PC-9 (cell line): ENCODE measurements at regions of chr19 and their contacts with region 1.

Region 1: DNA sequence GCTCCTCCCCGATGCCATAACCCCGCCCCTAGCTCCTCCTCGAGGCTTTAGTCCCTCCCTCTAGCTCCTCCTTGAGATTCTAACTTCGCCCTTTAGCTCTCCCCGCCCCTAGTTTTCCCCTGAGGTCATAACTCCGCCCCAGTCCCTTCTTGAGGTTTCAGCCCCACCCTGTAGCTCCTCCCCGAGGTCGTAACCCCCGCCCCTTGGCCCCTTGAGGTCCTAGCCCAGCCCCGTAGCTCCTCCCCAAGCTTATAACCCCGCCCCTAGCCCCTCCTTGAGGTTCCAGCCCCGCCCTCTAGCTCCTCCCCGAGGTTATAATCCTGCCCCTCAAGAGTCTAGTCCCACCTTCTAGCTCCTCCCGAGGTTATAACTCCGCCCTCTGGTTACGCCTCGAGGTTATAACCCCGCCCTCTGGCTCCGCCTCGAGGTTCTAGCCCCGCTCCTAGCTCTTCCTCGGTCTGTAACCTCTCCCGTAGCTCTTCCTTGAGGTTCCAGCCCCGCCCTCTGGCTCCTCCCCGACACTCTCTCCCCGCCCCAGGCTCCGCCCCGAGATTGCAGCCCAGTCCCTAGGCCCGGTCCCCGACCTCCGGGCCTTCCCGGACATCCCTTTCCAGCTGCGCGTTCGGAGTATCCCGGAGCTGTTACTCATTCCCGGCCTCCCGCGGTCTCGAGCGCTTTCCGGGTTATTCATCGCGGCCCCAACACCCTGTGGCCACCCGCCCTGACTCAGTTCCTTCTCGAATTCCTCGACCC is 1.4 kb downstream of the PLAUR start:
- DNase-seq: peak; percentile 97 to 99
- H3K4me3 ChIP-seq: peak overlapping the region; percentile 92
- H3K27ac ChIP-seq: peak overlapping the region; percentile 86
- H3K4me1 ChIP-seq: peaks cover 31% of the 10 kb centered on the region
- H3K27me3 ChIP-seq: no peaks in the 10 kb centered on the region
- CTCF ChIP-seq: no peak

Region 2: DNA sequence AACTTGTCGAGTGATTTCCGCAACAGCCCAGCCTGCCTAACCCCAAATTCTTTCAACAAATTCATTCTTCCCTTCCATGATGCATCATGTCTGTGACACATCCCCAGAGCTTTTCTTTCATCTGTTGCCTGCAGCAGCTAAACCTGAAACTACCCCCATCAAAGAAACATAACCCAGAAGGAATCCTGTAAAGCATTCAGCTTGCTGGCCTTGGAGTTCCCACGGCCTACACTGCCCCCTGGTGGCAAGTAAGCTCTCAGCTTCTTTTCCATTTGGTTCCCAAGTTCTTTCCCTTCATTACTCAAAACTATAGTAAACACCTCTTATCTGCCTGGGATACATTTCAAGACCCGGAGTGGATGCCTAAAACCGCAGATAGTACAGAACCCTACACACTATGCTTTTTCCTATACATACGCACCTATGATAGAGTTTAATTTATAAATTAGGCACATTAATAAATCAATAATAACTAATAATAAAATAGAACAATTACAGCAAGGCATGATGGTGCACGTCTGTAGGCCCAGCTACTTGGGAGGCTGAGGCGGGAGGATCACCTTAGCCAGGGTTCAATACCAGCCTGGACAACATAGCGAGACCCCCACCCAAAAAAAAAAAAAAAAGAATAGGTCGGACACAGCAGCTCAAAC is 149.0 kb before region 1 on chr19:
- CTCF ChIA-PET with region 1: interaction called, 3 read pairs
- POLR2A ChIA-PET with region 1: interaction called, 15 read pairs
- intact Hi-C with region 1: no loop called
- DNase-seq: peak; percentile 86 to 97
- H3K4me3 ChIP-seq: no peak overlapping the region
- H3K27ac ChIP-seq: peak overlapping the region; percentile 95
- H3K4me1 ChIP-seq: peaks cover 40% of the 10 kb centered on the region
- H3K27me3 ChIP-seq: no peaks in the 10 kb centered on the region
- CTCF ChIP-seq: peak; percentile 94

Region 3: GRCh38 chr19:43700395-43701000 is 31.9 kb after region 1 on chr19:
- CTCF ChIA-PET with region 1: interaction called, 14 read pairs
- POLR2A ChIA-PET with region 1: interaction called, 35 read pairs
- intact Hi-C with region 1: no loop called
- DNase-seq: peak in 1 of 2 experiments; percentile 61
- H3K4me3 ChIP-seq: peak overlapping the region; percentile 44; the same call in 1 of the 2 replicates
- H3K27ac ChIP-seq: peak overlapping the region; percentile 80
- H3K4me1 ChIP-seq: peaks cover 36% of the 10 kb centered on the region
- H3K27me3 ChIP-seq: no peaks in the 10 kb centered on the region
- CTCF ChIP-seq: no peak

Region 4: GRCh38 chr19:43743022-43743421 is 74.4 kb after region 1 on chr19:
- CTCF ChIA-PET with region 1: interaction called, 7 read pairs
- POLR2A ChIA-PET with region 1: no interaction called
- intact Hi-C with region 1: loop called (anchors 2 kb)
- DNase-seq: no peak
- H3K4me3 ChIP-seq: no peak overlapping the region
- H3K27ac ChIP-seq: no peak overlapping the region
- H3K4me1 ChIP-seq: peaks cover 22% of the 10 kb centered on the region
- H3K27me3 ChIP-seq: no peaks in the 10 kb centered on the region
- CTCF ChIP-seq: no peak

Region 5: GRCh38 chr19:43784981-43785808 is 116.6 kb after region 1 on chr19:
- CTCF ChIA-PET with region 1: interaction called, 6 read pairs
- POLR2A ChIA-PET with region 1: interaction called, 11 read pairs
- intact Hi-C with region 1: loop called (anchors 1 kb)
- DNase-seq: peak; percentile 86 to 91
- H3K4me3 ChIP-seq: peak overlapping the region; percentile 16; the same call in 1 of the 2 replicates
- H3K27ac ChIP-seq: peak overlapping the region; percentile 70
- H3K4me1 ChIP-seq: peaks cover 43% of the 10 kb centered on the region
- H3K27me3 ChIP-seq: no peaks in the 10 kb centered on the region
- CTCF ChIP-seq: peak; percentile 97

Region 6: DNA sequence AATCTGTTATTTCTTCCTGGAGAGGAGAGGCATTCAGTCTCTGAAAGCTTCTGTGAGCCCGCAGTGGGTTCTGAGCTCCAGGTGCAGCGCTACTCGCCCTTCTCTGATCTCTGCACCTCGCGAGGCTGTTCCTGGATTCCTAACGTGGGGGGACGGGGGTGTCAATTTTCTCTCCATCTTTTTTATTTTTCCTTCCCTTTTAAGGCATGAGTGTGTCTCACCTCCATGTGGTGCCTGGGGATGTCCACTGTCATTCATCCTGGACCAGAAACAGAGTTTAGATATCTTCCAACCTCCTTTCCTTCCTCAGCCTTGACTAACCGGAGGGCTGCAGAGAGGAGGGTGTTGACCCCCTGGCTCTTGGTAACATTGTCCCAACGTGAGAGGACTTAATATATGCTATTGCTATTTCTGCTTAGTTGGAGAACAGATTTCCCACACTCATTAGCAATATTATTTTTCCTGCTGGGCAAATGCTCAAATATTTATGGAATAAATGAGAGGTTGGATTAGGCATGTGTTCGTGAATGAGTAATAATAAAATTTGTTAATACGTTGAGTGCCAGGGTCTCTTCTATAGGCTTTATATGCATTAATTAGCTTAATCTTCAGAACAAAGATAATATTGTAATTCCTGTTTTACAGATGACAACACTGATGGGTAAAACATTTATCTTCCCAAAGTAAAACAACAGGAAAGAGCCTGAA is 591.9 kb after region 1 on chr19:
- CTCF ChIA-PET with region 1: interaction called, 11 read pairs
- POLR2A ChIA-PET with region 1: no interaction called
- intact Hi-C with region 1: no loop called
- DNase-seq: no peak
- H3K4me3 ChIP-seq: peak overlapping the region; percentile 50
- H3K27ac ChIP-seq: no peak overlapping the region
- H3K4me1 ChIP-seq: peaks cover 10% of the 10 kb centered on the region; the same call in 1 of the 2 replicates
- H3K27me3 ChIP-seq: no peaks in the 10 kb centered on the region
- CTCF ChIP-seq: no peak

Region 7: DNA sequence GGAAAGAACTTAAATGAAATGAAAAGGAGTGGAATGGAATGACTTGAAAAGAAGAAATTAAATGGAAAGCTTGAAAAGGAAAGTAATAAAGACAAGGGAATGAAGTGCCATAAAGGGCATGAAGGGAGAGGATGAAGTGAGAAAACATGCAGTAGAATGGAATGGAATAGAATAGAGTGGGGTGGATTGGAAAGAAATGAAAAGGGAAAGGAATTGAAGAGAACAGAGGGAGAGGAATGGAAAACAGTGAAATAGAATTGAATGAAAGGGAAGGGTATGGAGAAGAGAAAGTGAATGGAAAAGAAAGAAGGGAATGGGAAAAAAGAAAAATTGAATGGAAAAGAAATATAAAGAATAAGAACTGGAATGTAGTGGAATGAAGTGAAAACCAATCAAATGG is 840.9 kb after region 1 on chr19:
- CTCF ChIA-PET with region 1: no interaction called
- POLR2A ChIA-PET with region 1: no interaction called
- intact Hi-C with region 1: no loop called
- DNase-seq: no peak
- H3K4me3 ChIP-seq: no peak overlapping the region
- H3K27ac ChIP-seq: no peak overlapping the region
- H3K4me1 ChIP-seq: no peaks in the 10 kb centered on the region; the same call in 1 of the 2 replicates
- H3K27me3 ChIP-seq: peaks cover 15% of the 10 kb centered on the region; the same call in 1 of the 2 replicates
- CTCF ChIP-seq: no peak